Transverse colon (tissue), 4 donors: ENCODE measurements at regions of chr15 and their contacts with region 1.

Region 1: DNA sequence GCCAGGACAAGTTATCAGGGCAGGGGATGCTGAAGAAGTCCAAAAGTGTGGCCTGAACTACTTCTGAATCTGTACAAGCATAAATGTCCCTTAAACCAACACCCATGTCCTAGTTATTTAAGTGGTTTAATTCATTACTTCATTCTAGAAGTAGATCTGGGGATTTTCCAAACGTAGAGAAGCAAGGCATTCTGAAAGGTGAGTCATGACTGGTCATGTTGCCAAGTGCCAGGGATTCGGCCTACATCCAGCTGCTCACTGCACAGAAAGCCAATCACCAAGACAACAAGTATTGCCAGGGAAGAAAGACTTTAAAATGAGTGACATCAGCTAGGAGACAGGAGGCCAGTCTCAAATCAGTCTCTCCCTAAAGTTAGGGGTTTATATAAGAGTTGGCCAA is 396.6 kb downstream of the GABRB3 start:
- DNase-seq: no peak
- H3K4me3 ChIP-seq: no peak overlapping the region
- H3K27ac ChIP-seq: no peak overlapping the region
- H3K4me1 ChIP-seq: no peaks in the 10 kb centered on the region
- H3K27me3 ChIP-seq: no peaks in the 10 kb centered on the region
- CTCF ChIP-seq: no peak
- EP300 ChIP-seq: no peak
- POLR2A ChIP-seq: no peak

Region 2: GRCh38 chr15:25993506-25993905 is 382.7 kb before region 1 on chr15:
- in situ Hi-C with region 1: no loop called
- intact Hi-C with region 1: no loop called
- DNase-seq: no peak
- H3K4me3 ChIP-seq: no peak overlapping the region
- H3K27ac ChIP-seq: no peak overlapping the region
- H3K4me1 ChIP-seq: no peaks in the 10 kb centered on the region
- H3K27me3 ChIP-seq: no peaks in the 10 kb centered on the region
- CTCF ChIP-seq: no peak
- EP300 ChIP-seq: no peak
- POLR2A ChIP-seq: no peak

Region 3: DNA sequence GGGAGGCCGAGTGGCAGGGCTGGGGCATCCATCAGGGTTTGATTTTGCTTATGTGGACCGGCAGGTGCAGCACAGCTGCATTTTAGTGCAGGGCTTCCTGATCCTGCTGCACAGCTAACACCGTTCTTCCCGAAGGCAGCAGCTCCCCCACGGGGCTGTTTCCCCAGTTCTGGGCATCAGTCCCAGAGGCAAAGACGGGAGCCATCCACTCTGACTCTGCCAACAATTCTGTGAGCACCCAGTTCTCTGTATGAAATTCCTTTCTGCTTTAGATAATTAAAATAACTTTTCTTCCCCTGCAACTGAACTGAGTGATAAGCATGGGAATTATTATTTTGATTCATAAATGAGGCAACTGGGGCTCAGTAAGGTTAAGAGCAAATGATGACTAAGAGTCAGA is 250.2 kb before region 1 on chr15:
- in situ Hi-C with region 1: no loop called
- intact Hi-C with region 1: no loop called
- DNase-seq: no peak
- H3K4me3 ChIP-seq: no peak overlapping the region
- H3K27ac ChIP-seq: no peak overlapping the region
- H3K4me1 ChIP-seq: no peaks in the 10 kb centered on the region
- H3K27me3 ChIP-seq: no peaks in the 10 kb centered on the region
- CTCF ChIP-seq: no peak
- EP300 ChIP-seq: no peak
- POLR2A ChIP-seq: no peak

Region 4: DNA sequence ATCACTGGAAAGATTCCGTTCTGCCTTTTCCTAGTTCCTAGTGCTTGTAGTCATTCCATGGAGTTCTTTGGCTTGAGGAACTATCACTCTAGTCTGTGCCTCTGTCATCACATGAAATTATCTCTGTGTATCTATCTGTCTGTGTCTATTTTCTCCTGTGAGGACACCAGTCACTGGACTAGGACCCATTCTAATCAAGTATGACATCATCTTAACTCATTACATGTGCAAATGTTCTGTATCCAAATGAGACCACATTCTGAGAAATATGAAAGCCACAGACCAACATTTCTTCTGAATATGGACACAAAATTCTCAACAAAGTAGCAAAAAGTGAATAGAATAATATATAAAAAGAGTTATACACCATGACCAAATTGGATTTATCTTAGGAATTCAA is 105.1 kb after region 1 on chr15:
- in situ Hi-C with region 1: no loop called
- intact Hi-C with region 1: loop called (anchors 10 kb)
- DNase-seq: no peak
- H3K4me3 ChIP-seq: no peak overlapping the region
- H3K27ac ChIP-seq: no peak overlapping the region
- H3K4me1 ChIP-seq: no peaks in the 10 kb centered on the region
- H3K27me3 ChIP-seq: no peaks in the 10 kb centered on the region
- CTCF ChIP-seq: no peak
- EP300 ChIP-seq: no peak
- POLR2A ChIP-seq: no peak

Region 5: GRCh38 chr15:26665957-26666791 is 289.9 kb after region 1 on chr15:
- in situ Hi-C with region 1: no loop called
- intact Hi-C with region 1: no loop called
- DNase-seq: no peak
- H3K4me3 ChIP-seq: no peak overlapping the region
- H3K27ac ChIP-seq: no peak overlapping the region
- H3K4me1 ChIP-seq: no peaks in the 10 kb centered on the region
- H3K27me3 ChIP-seq: no peaks in the 10 kb centered on the region
- CTCF ChIP-seq: no peak
- EP300 ChIP-seq: no peak
- POLR2A ChIP-seq: no peak